CD4-positive, alpha-beta memory T cell (primary cell): ENCODE measurements at regions of chr2 and their contacts with region 1.

Region 1: GRCh38 chr2:201158111-201158929 is 24.6 kb upstream of the CASP10 start:
- DNase-seq: peak; percentile 64 to 75 (median 68)
- H3K4me3 ChIP-seq: no peak overlapping the region
- H3K4me3 Mint-ChIP-seq: peak overlapping the region in 3 of 8 donors; percentile 26 to 52 (median 30)
- H3K27ac ChIP-seq: peak overlapping the region; percentile 44
- H3K27ac Mint-ChIP-seq: peak overlapping the region; percentile 69 to 95 (median 89)
- H3K4me1 ChIP-seq: peaks cover 19% of the 10 kb centered on the region
- H3K4me1 Mint-ChIP-seq: peaks cover 9 to 23% (median 16%) of the 10 kb centered on the region in 4 donors
- H3K27me3 ChIP-seq: no peaks in the 10 kb centered on the region
- H3K27me3 Mint-ChIP-seq: no peaks in the 10 kb centered on the region

Region 2: GRCh38 chr2:200901459-200902072 is 256.8 kb before region 1 on chr2:
- CTCF ChIA-PET with region 1: interaction called, 28 read pairs
- POLR2A ChIA-PET with region 1: interaction called, 3 read pairs
- intact Hi-C with region 1: loop called (anchors 1 kb)
- DNase-seq: peak; percentile 76 to 83 (median 79)
- H3K4me3 ChIP-seq: no peak overlapping the region
- H3K4me3 Mint-ChIP-seq: no peak overlapping the region
- H3K27ac ChIP-seq: peak overlapping the region; percentile 1
- H3K27ac Mint-ChIP-seq: peak overlapping the region; percentile 10 to 81 (median 65)
- H3K4me1 ChIP-seq: no peaks in the 10 kb centered on the region
- H3K4me1 Mint-ChIP-seq: peaks cover 6 to 7% (median 6%) of the 10 kb centered on the region in 4 donors
- H3K27me3 ChIP-seq: no peaks in the 10 kb centered on the region
- H3K27me3 Mint-ChIP-seq: no peaks in the 10 kb centered on the region

Region 3: GRCh38 chr2:200950378-200950777 is 207.9 kb before region 1 on chr2:
- CTCF ChIA-PET with region 1: no interaction called
- POLR2A ChIA-PET with region 1: no interaction called
- intact Hi-C with region 1: no loop called
- DNase-seq: no peak
- H3K4me3 ChIP-seq: no peak overlapping the region
- H3K4me3 Mint-ChIP-seq: no peak overlapping the region
- H3K27ac ChIP-seq: no peak overlapping the region
- H3K27ac Mint-ChIP-seq: peak overlapping the region in 1 of 7 donors; percentile 25
- H3K4me1 ChIP-seq: no peaks in the 10 kb centered on the region
- H3K4me1 Mint-ChIP-seq: peaks cover 0 to 3% (median 0%) of the 10 kb centered on the region in 4 donors
- H3K27me3 ChIP-seq: no peaks in the 10 kb centered on the region
- H3K27me3 Mint-ChIP-seq: no peaks in the 10 kb centered on the region

Region 4: DNA sequence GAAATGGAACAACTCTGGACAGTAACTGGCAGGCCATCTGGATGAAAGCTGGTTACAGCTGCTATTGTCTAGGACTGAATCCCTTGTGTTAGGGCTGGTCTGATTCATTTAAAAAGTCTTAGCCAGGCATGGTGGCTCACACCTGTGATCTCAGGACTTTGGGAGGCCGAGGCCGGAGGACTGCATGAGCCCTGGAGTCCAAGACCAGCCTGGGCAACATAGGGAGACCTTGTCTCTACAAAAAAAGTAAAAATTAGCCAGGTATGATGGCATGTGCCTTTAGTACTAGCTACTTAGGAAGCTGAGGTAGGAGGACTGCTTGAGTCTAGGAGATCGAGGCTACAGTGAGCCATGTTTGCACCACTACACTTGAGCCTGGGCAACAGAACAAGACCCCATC is 57.8 kb before region 1 on chr2:
- CTCF ChIA-PET with region 1: interaction called, 12 read pairs
- POLR2A ChIA-PET with region 1: no interaction called
- intact Hi-C with region 1: no loop called
- DNase-seq: no peak
- H3K4me3 ChIP-seq: no peak overlapping the region
- H3K4me3 Mint-ChIP-seq: no peak overlapping the region
- H3K27ac ChIP-seq: no peak overlapping the region
- H3K27ac Mint-ChIP-seq: no peak overlapping the region
- H3K4me1 ChIP-seq: no peaks in the 10 kb centered on the region
- H3K4me1 Mint-ChIP-seq: no peaks in the 10 kb centered on the region
- H3K27me3 ChIP-seq: no peaks in the 10 kb centered on the region
- H3K27me3 Mint-ChIP-seq: no peaks in the 10 kb centered on the region

Region 5: GRCh38 chr2:201130524-201131186 is 27.7 kb before region 1 on chr2:
- CTCF ChIA-PET with region 1: interaction called, 19 read pairs
- POLR2A ChIA-PET with region 1: interaction called, 27 read pairs
- intact Hi-C with region 1: loop called (anchors 1 kb)
- DNase-seq: peak; percentile 42 to 85 (median 55)
- H3K4me3 ChIP-seq: peak overlapping the region in 1 of 2 donors; percentile 34
- H3K4me3 Mint-ChIP-seq: peak overlapping the region; percentile 72 to 86 (median 80)
- H3K27ac ChIP-seq: peak overlapping the region; percentile 64
- H3K27ac Mint-ChIP-seq: peak overlapping the region; percentile 87 to 98 (median 97)
- H3K4me1 ChIP-seq: peaks cover 89% of the 10 kb centered on the region
- H3K4me1 Mint-ChIP-seq: peaks cover 64 to 81% (median 72%) of the 10 kb centered on the region in 4 donors
- H3K27me3 ChIP-seq: no peaks in the 10 kb centered on the region
- H3K27me3 Mint-ChIP-seq: no peaks in the 10 kb centered on the region

Region 6: DNA sequence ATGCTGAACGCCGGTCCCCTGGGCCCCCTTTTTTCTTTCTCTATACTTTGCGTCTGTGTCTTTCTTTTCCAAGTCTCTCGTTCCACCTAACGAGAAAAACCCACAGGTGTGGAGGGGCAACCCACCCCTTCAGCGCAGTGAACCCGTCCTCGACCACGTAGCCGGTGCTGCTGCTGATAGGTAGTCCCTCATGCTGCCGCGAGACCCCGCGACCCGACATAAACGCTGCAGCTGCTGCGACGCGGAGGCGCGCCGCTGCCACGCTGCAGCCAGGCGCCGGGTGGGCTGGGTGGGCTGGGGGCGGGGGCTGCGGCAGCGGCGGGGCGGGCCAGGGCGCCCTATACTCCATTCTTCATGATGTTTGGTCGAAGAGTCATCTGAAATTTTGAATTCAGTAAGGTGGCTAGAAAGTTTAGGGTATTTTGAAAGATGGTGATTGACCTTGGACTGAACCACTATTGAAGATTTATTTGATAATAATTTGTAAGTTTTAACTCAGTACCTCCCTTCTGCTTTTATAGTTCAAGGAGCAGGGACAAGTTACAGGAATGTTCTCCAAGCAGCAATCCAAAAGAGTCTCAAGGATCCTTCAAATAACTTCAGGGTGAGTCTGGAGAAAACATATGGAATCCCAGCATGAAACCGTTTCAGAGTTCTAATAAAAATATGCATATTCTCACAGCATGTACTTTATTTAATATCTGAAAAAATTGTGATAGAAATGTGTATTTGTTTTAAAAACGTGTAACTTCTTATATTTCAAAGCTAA is 18.3 kb before region 1 on chr2:
- CTCF ChIA-PET with region 1: interaction called, 27 read pairs
- POLR2A ChIA-PET with region 1: interaction called, 5 read pairs
- intact Hi-C with region 1: no loop called
- DNase-seq: no peak
- H3K4me3 ChIP-seq: no peak overlapping the region
- H3K4me3 Mint-ChIP-seq: no peak overlapping the region
- H3K27ac ChIP-seq: no peak overlapping the region
- H3K27ac Mint-ChIP-seq: peak overlapping the region in 6 of 7 donors; percentile 27 to 79 (median 68)
- H3K4me1 ChIP-seq: peaks cover 13% of the 10 kb centered on the region
- H3K4me1 Mint-ChIP-seq: peaks cover 20 to 38% (median 29%) of the 10 kb centered on the region in 4 donors
- H3K27me3 ChIP-seq: no peaks in the 10 kb centered on the region
- H3K27me3 Mint-ChIP-seq: no peaks in the 10 kb centered on the region

Region 7: DNA sequence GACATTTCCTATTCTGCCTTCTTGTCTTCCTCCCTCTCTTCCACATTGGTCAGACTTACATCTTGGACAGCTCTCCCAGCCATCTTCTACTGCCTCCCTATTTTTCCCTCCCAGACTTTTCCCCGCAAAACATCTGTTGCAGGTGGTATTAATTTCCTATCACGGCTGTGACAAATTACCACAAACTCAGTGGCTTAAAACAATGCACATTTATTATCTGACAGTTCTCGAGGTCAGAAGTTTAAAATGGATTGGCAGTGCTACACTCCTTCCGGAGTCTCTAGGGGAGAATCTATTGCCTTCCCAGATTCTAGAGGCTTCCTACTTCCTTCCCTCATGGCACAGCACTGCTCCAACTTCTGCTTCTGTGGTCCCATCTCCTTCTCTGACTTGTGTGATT is 326.5 kb after region 1 on chr2:
- CTCF ChIA-PET with region 1: no interaction called
- POLR2A ChIA-PET with region 1: no interaction called
- intact Hi-C with region 1: no loop called
- DNase-seq: no peak
- H3K4me3 ChIP-seq: no peak overlapping the region
- H3K4me3 Mint-ChIP-seq: no peak overlapping the region
- H3K27ac ChIP-seq: no peak overlapping the region
- H3K27ac Mint-ChIP-seq: no peak overlapping the region
- H3K4me1 ChIP-seq: no peaks in the 10 kb centered on the region
- H3K4me1 Mint-ChIP-seq: no peaks in the 10 kb centered on the region
- H3K27me3 ChIP-seq: no peaks in the 10 kb centered on the region
- H3K27me3 Mint-ChIP-seq: peaks cover 0 to 2% of the 10 kb centered on the region in 2 donors